ENCODE measurements at regions of chr11 and their contacts with region 1.

Region 1: GRCh38 chr11:69409812-69410540 is 71.5 kb upstream of the LINC01488 start:
- DNase-seq: no peak
- ATAC-seq: peak in 1 of 4 donors; percentile 18
- H3K4me3 ChIP-seq: no peak overlapping the region
- H3K27ac ChIP-seq: no peak overlapping the region
- H3K4me1 ChIP-seq: peaks cover 0 to 14% (median 6%) of the 10 kb centered on the region in 12 donors
- H3K27me3 ChIP-seq: no peaks in the 10 kb centered on the region
- CTCF ChIP-seq: no peak
- POLR2A ChIP-seq: no peak

Region 2: DNA sequence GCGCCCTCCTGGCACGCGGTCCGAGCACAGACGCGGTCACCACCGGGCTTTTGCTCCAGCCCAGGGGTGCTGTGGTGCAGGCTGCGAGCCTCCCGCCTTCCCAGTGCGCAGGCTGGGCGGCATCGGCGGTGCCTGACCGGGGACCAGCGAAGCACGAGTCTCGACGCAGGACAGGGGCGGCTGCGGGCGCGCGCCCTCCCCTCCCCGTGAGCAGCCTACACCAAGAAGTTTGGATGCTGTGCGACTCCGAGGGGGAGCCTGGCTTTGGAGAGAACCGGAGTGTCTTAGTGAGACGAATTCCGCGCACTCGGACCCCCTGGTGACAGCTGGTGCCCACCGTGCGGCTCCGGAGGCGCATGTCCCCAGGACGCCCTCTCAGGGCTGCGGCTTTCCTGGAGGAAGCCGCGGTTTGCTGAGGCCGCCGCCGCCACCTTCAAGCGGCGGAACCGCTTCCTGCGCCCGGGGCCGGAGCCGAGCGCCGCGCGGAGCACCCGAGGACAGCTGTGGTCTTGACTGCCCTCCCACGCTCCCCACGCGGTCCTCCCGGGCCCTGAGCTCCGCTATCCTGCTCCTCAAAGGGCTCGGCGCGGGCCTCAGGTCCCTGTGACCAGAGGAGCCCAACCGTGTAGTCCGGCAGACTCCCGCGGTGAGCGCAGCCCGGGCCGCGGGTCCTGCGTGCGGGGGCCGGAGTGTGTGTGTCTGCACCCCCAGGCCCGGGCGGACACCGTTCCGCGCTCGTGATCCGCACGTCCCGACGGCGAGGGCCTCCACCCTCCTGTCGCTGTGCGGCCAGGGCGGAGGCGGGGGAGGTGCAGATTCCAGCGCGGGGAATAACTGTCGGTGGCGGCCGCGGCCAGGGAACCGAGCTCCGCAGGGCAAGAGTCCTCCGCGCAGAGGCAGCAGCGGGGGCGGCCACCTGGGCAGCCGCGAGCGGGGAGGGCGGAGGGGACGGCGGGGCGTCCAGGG is 407.6 kb after region 1 on chr11:
- intact Hi-C with region 1: loop called in 1 of 10 experiments (anchors 5 kb)
- DNase-seq: no peak
- ATAC-seq: peak in 1 of 4 donors; percentile 42
- H3K4me3 ChIP-seq: peak overlapping the region in 8 of 12 donors; percentile 2 to 33 (median 7)
- H3K27ac ChIP-seq: no peak overlapping the region
- H3K4me1 ChIP-seq: peaks cover 0 to 23% (median 5%) of the 10 kb centered on the region in 12 donors
- H3K27me3 ChIP-seq: peaks cover 35 to 86% (median 57%) of the 10 kb centered on the region in 9 donors
- CTCF ChIP-seq: no peak
- POLR2A ChIP-seq: no peak